Mammary epithelial cell (primary cell): ENCODE measurements at regions of chr6 and their contacts with region 1.

Region 1: DNA sequence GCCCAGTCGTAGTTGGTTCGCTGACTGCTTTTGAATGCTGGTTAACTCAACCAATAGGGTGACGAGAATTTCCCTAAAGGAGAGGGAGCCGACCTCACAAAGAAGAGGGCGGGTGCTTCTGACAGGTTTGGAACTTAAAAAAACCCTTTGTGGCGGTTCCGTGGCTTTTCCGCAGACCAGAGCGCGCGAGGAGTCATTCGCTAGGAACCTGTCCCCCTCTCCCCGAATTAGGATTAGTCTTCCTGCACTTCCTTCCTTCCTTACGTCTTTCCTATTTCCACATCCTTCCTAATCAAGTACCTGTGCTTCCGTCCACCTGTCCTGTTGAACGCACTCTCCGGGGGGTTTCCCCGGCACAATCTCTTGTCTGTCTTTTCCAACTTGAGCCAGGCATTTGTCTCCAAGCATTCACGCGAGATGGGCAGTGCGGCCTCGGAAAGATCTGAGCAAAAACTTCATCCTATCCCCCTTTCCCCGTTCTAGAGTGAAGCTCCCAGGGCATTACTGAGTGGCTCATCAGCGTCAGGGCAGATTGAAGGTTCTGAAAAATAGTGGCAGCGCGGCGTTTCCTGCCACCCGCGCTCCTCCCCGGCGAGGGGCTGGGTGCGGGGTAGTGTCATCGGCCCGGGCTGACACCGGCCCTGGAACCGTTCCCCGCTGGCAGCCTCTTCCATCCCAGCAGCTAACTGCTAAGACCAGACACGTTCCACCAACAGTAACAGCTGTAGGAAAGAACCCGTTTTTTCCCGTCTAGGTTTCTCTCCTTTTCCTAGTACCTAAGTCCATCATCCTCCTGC is 1.5 kb upstream of the STXBP5 start:
- DNase-seq: peak; percentile 96
- H3K4me3 ChIP-seq: peak overlapping the region; percentile 67 to 93 (median 89)
- H3K27ac ChIP-seq: peak overlapping the region; percentile 66
- H3K4me1 ChIP-seq: peaks cover 5% of the 10 kb centered on the region
- H3K27me3 ChIP-seq: no peaks in the 10 kb centered on the region
- CTCF ChIP-seq: no peak

Region 2: DNA sequence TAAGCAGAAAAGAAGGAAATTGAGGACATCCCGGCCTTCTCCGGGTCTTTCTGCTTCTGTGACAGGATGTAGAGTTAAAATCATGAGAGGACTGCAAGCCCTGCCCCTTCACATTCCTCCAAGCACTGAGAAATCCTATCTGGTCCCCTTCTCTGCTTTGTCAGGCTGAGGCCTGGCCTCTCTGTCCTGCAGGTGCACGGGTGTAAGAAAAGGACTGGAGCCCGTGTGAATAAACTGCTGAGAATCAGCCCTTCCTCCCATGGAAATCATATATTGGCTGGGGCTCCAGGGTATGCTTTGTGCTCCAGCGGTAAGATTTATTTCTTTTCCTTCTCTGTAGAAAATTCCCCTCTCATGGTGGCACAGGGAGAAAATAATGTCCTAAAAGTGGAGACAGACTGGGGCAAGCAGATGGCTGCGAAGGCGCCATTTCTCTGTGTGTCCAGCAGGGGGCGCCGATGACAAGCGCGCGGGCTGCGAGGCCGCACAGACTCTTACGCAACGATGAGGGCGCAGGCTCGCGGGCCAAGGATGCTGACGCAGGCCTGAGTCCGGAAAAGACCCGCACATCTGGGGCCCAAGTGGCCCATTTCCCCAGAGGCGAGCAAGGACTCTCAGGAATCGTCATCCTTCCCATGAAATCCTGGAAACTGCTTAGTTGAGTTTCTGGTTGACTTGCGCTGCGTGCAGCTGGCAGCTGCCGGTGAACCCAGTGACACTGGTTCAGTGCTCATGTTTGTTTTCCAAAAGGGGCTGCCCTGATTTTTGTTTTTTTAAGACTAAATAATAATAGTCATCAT is 345.3 kb before region 1 on chr6:
- CTCF ChIA-PET with region 1: no interaction called
- dilution Hi-C with region 1: no loop called
- in situ Hi-C with region 1: no loop called
- intact Hi-C with region 1: loop called (anchors 1 kb)
- DNase-seq: peak; percentile 60
- H3K4me3 ChIP-seq: peak overlapping the region in 1 of 3 experiments; percentile 25
- H3K27ac ChIP-seq: no peak overlapping the region
- H3K4me1 ChIP-seq: peaks cover 8% of the 10 kb centered on the region
- H3K27me3 ChIP-seq: no peaks in the 10 kb centered on the region
- CTCF ChIP-seq: peak; percentile 91 to 96

Region 3: GRCh38 chr6:146913842-146914488 is 288.7 kb before region 1 on chr6:
- CTCF ChIA-PET with region 1: no interaction called
- dilution Hi-C with region 1: no loop called
- in situ Hi-C with region 1: loop called in 1 of 2 experiments (anchors 10 kb)
- intact Hi-C with region 1: loop called (anchors 1 kb)
- DNase-seq: peak; percentile 92
- H3K4me3 ChIP-seq: peak overlapping the region; percentile 22 to 43 (median 33)
- H3K27ac ChIP-seq: peak overlapping the region; percentile 98
- H3K4me1 ChIP-seq: peaks cover 37% of the 10 kb centered on the region
- H3K27me3 ChIP-seq: no peaks in the 10 kb centered on the region
- CTCF ChIP-seq: no peak

Region 4: DNA sequence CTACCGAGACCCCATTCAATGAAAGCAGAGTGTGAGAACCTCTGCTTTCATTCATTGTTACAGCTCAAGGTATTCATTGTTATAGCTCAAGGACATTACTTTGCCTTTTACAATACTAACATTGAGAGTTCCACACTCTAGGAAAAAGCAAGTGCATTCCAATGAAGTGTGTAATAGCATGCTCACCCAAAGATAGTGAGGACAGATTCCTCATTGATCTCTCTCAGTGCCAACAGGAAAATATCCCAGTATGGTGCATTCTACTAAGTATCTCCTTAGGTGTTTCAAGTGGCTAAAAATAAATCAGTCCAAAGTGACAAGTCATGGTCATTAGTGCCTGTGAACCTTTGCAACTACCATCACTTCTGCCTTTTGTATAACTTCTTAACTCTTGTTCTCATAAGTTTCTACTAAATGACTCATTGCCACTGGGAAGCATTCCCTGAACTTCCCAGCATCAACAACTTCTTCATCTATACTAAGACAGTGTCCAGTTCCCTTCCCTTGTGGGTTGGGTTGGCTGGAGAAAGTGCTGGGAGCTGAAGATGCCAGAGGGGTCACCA is 139.2 kb before region 1 on chr6:
- CTCF ChIA-PET with region 1: no interaction called
- dilution Hi-C with region 1: no loop called
- in situ Hi-C with region 1: no loop called
- intact Hi-C with region 1: loop called (anchors 5 kb)
- DNase-seq: peak; percentile 69
- H3K4me3 ChIP-seq: no peak overlapping the region
- H3K27ac ChIP-seq: no peak overlapping the region
- H3K4me1 ChIP-seq: peaks cover 13% of the 10 kb centered on the region
- H3K27me3 ChIP-seq: no peaks in the 10 kb centered on the region
- CTCF ChIP-seq: no peak

Region 5: DNA sequence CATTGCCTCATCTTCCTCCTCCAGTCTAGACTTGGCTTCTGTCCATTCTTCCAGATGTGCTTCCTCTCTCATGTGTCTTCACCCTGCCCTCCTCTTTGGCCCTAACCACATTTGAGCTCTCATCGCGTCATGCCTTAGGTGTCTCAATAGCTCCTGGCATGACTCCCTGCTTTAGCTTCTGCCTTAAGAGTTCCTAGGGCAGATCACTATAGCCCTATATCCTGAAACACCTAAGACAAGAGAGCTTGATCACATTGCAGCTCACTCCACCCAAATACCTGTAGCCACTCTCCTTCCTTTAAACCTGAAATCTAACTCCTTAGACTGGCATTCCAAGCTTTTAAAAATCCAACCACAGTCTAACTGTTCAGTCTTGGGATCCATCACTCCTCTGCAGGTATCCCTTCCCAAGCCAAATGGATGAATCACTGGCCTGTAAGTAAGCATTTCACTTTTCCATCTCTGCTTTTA is 67.5 kb before region 1 on chr6:
- CTCF ChIA-PET with region 1: no interaction called
- dilution Hi-C with region 1: no loop called
- in situ Hi-C with region 1: no loop called
- intact Hi-C with region 1: loop called (anchors 2 kb)
- DNase-seq: peak; percentile 94
- H3K4me3 ChIP-seq: no peak overlapping the region
- H3K27ac ChIP-seq: no peak overlapping the region
- H3K4me1 ChIP-seq: peaks cover 8% of the 10 kb centered on the region
- H3K27me3 ChIP-seq: no peaks in the 10 kb centered on the region
- CTCF ChIP-seq: no peak

Region 6: DNA sequence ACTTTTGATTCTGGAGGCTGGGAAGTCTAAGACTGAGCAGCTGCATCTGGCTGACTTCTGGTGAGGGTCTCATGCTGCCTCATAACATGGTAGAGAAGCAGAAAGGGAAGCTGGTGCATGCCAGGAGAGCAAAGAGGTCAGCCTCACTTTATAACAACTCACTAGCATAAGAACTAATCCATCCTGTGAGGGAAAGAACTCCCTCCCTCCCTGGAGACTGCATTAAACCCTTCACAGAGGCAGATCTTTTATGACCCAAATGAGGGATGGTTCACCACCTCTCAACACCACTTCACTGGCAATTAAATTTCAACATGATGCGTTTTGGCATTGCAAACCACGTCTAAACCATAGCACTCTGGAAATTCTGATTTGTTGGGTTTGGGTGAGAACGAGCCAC is 35.5 kb after region 1 on chr6:
- CTCF ChIA-PET with region 1: no interaction called
- dilution Hi-C with region 1: no loop called
- in situ Hi-C with region 1: no loop called
- intact Hi-C with region 1: no loop called
- DNase-seq: no peak
- H3K4me3 ChIP-seq: no peak overlapping the region
- H3K27ac ChIP-seq: no peak overlapping the region
- H3K4me1 ChIP-seq: no peaks in the 10 kb centered on the region
- H3K27me3 ChIP-seq: no peaks in the 10 kb centered on the region
- CTCF ChIP-seq: no peak

Region 7: GRCh38 chr6:147285087-147285855 is 82.6 kb after region 1 on chr6:
- CTCF ChIA-PET with region 1: no interaction called
- dilution Hi-C with region 1: no loop called
- in situ Hi-C with region 1: no loop called
- intact Hi-C with region 1: loop called (anchors 2 kb)
- DNase-seq: peak; percentile 22
- H3K4me3 ChIP-seq: no peak overlapping the region
- H3K27ac ChIP-seq: no peak overlapping the region
- H3K4me1 ChIP-seq: peaks cover 13% of the 10 kb centered on the region
- H3K27me3 ChIP-seq: no peaks in the 10 kb centered on the region
- CTCF ChIP-seq: peak; percentile 35 to 50